Heart left ventricle (tissue), 16 donors: ENCODE measurements at regions of chr17 and their contacts with region 1.

Region 1: GRCh38 chr17:9177212-9177611 is 155.9 kb downstream of the NTN1 start:
- DNase-seq: peak in 4 of 5 donors; percentile 25 to 71 (median 52)
- ATAC-seq: peak; percentile 16 to 59 (median 40)
- H3K4me3 ChIP-seq: no peak overlapping the region
- H3K27ac ChIP-seq: no peak overlapping the region
- H3K4me1 ChIP-seq: peaks cover 0 to 31% (median 14%) of the 10 kb centered on the region in 12 donors
- H3K27me3 ChIP-seq: no peaks in the 10 kb centered on the region
- CTCF ChIP-seq: no peak
- POLR2A ChIP-seq: no peak

Region 2: GRCh38 chr17:9284884-9285283 is 107.7 kb after region 1 on chr17:
- intact Hi-C with region 1: loop called in 1 of 10 experiments (anchors 5 kb)
- DNase-seq: peak in 4 of 5 donors; percentile 31 to 57 (median 44)
- ATAC-seq: peak; percentile 61 to 90 (median 76)
- H3K4me3 ChIP-seq: no peak overlapping the region
- H3K27ac ChIP-seq: peak overlapping the region in 5 of 12 donors; percentile 7 to 48 (median 26)
- H3K4me1 ChIP-seq: peaks cover 0 to 17% (median 0%) of the 10 kb centered on the region in 12 donors
- H3K27me3 ChIP-seq: no peaks in the 10 kb centered on the region
- CTCF ChIP-seq: no peak
- POLR2A ChIP-seq: no peak

Region 3: DNA sequence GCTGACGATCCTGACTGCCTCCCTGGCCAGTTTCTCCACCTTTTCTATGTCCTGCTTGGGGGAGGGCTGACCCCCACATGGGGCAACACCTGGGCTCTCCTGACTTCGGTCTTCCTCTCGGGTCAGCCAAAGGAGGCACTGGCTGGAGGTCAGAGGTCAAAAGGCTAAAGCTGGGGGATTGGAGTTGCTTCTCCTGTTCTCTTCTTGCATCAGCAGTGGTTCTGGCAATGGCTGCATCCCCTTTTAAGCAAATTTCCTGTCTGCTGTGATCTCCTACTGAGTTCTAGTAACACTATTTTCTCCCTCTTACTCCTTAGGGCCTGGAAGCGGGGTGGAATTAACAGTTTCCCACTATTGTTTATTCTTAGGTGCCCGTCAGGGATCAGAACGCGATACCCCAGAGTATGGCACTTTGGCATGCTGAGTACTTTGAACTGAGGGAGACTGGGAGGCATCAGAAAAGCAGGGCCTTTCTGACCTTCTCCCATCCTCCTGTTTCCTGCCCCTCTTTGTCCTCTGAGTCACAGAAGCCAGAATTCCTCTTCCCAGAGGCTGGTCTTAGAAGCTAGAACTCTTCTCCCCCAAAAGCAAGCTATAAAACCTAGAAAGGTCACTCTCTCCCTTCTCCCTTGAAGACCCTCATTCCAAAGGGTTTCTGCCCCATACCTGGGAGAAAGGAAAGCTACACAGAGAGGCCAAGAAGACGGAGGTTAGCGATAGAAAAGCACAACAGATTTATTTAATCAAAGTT is 130.3 kb after region 1 on chr17:
- intact Hi-C with region 1: no loop called
- DNase-seq: no peak
- ATAC-seq: no peak
- H3K4me3 ChIP-seq: no peak overlapping the region
- H3K27ac ChIP-seq: no peak overlapping the region
- H3K4me1 ChIP-seq: no peaks in the 10 kb centered on the region
- H3K27me3 ChIP-seq: no peaks in the 10 kb centered on the region
- CTCF ChIP-seq: no peak
- POLR2A ChIP-seq: no peak

Region 4: DNA sequence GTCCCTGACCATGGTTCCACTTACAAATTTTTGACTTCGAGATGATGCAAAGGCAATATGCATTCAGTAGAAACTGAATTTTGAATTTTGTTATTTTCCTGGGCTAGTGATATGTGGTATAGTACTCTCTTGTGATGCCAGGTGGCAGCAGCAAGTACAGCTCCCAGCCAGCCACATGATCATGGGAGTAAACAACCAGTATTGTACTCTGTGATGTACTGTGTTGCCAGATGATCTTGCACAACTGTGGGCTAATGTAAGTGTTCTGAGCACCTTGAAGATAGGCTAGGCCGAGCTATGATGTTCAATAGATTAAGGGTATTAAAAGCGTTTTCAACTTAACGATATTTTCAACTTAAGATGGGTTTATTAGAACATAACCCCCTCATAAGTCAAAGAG is 147.7 kb after region 1 on chr17:
- intact Hi-C with region 1: no loop called
- DNase-seq: no peak
- ATAC-seq: no peak
- H3K4me3 ChIP-seq: no peak overlapping the region
- H3K27ac ChIP-seq: no peak overlapping the region
- H3K4me1 ChIP-seq: peaks cover 0 to 5% (median 0%) of the 10 kb centered on the region in 12 donors
- H3K27me3 ChIP-seq: no peaks in the 10 kb centered on the region
- CTCF ChIP-seq: no peak
- POLR2A ChIP-seq: no peak